ENCODE measurements at regions of chr3 and their contacts with region 1.

Region 1: GRCh38 chr3:73056014-73056844 is 5.2 kb upstream of the EBLN2 start:
- DNase-seq: no peak
- H3K4me3 Mint-ChIP-seq: no peak overlapping the region
- H3K27ac Mint-ChIP-seq: no peak overlapping the region
- H3K4me1 Mint-ChIP-seq: peaks cover 7% of the 10 kb centered on the region
- H3K27me3 Mint-ChIP-seq: no peaks in the 10 kb centered on the region

Region 2: GRCh38 chr3:72938471-72939265 is 117.6 kb before region 1 on chr3:
- intact Hi-C with region 1: loop called (anchors 1 kb)
- DNase-seq: peak; percentile 75
- H3K4me3 Mint-ChIP-seq: no peak overlapping the region
- H3K27ac Mint-ChIP-seq: no peak overlapping the region
- H3K4me1 Mint-ChIP-seq: no peaks in the 10 kb centered on the region
- H3K27me3 Mint-ChIP-seq: peaks cover 20% of the 10 kb centered on the region

Region 3: GRCh38 chr3:72982609-72983366 is 73.4 kb before region 1 on chr3:
- intact Hi-C with region 1: no loop called
- DNase-seq: no peak
- H3K4me3 Mint-ChIP-seq: no peak overlapping the region
- H3K27ac Mint-ChIP-seq: no peak overlapping the region
- H3K4me1 Mint-ChIP-seq: peaks cover 7% of the 10 kb centered on the region
- H3K27me3 Mint-ChIP-seq: peaks cover 13% of the 10 kb centered on the region

Region 4: GRCh38 chr3:74124782-74125181 is 1068.6 kb after region 1 on chr3:
- intact Hi-C with region 1: no loop called
- DNase-seq: no peak
- H3K4me3 Mint-ChIP-seq: no peak overlapping the region
- H3K27ac Mint-ChIP-seq: no peak overlapping the region
- H3K4me1 Mint-ChIP-seq: no peaks in the 10 kb centered on the region
- H3K27me3 Mint-ChIP-seq: no peaks in the 10 kb centered on the region

Measured in activated CD4-positive, alpha-beta T cell treated with anti-CD3 and anti-CD28 coated beads, Interleukin-2, amount 10 ng/mL, durations not matched to agents 24 days and 14 days (primary cell).